CD4-positive, alpha-beta T cell (primary cell): ENCODE measurements at regions of chr6 and their contacts with region 1.

Region 1: GRCh38 chr6:137415127-137415833 is 78.9 kb downstream of the OLIG3 start:
- DNase-seq: peak; percentile 30 to 86 (median 56)
- ATAC-seq: peak; percentile 91
- H3K4me3 ChIP-seq: peak overlapping the region; percentile 52
- H3K4me3 Mint-ChIP-seq: peak overlapping the region; percentile 85
- H3K27ac ChIP-seq: peak overlapping the region; percentile 36 to 71
- H3K27ac Mint-ChIP-seq: peak overlapping the region; percentile 57
- H3K4me1 ChIP-seq: peaks cover 17% of the 10 kb centered on the region
- H3K4me1 Mint-ChIP-seq: peaks cover 13% of the 10 kb centered on the region
- H3K27me3 ChIP-seq: no peaks in the 10 kb centered on the region
- H3K27me3 Mint-ChIP-seq: peaks cover 4% of the 10 kb centered on the region
- CTCF ChIP-seq: peak; percentile 86

Region 2: DNA sequence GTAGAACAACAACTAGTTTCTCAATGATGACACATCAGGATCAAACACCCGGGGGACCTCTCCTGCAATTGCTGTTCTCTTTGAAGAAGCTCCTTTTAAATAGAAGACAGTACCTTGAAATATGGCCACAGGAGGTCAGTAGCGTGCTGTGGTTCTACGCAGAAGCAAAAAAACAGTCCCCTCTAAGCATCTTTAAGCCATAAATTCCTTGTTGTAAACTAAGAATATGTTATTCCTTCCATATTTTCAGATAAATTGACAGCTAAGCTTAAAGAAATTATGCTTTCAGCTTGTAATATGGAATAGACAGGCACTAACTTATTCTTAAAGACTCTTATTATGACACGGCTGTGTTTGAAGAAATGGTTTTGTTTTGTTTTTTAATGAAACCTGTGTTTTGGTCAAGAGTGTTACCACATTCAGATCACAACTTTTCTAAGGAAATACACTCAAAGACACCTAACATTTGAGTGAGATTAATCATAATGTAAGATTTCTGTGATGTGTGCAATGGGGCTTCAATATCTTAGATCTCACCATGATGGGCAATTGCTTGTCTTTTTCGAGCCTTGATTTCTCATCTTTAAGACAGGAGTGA is 320.8 kb before region 1 on chr6:
- CTCF ChIA-PET with region 1: interaction called, 5 read pairs
- POLR2A ChIA-PET with region 1: interaction called, 3 read pairs
- intact Hi-C with region 1: loop called (anchors 5 to 10 kb)
- DNase-seq: peak; percentile 22 to 80 (median 37)
- ATAC-seq: no peak
- H3K4me3 ChIP-seq: no peak overlapping the region
- H3K4me3 Mint-ChIP-seq: no peak overlapping the region
- H3K27ac ChIP-seq: no peak overlapping the region
- H3K27ac Mint-ChIP-seq: no peak overlapping the region
- H3K4me1 ChIP-seq: peaks cover 9% of the 10 kb centered on the region
- H3K4me1 Mint-ChIP-seq: peaks cover 12% of the 10 kb centered on the region
- H3K27me3 ChIP-seq: no peaks in the 10 kb centered on the region
- H3K27me3 Mint-ChIP-seq: peaks cover 5% of the 10 kb centered on the region
- CTCF ChIP-seq: peak; percentile 71

Region 3: GRCh38 chr6:137224799-137225198 is 190.5 kb before region 1 on chr6:
- CTCF ChIA-PET with region 1: no interaction called
- POLR2A ChIA-PET with region 1: no interaction called
- intact Hi-C with region 1: no loop called
- DNase-seq: peak in 4 of 14 experiments; percentile 18 to 70 (median 60)
- ATAC-seq: peak; percentile 57
- H3K4me3 ChIP-seq: no peak overlapping the region
- H3K4me3 Mint-ChIP-seq: peak overlapping the region; percentile 39
- H3K27ac ChIP-seq: no peak overlapping the region
- H3K27ac Mint-ChIP-seq: peak overlapping the region; percentile 2
- H3K4me1 ChIP-seq: peaks cover 45% of the 10 kb centered on the region
- H3K4me1 Mint-ChIP-seq: peaks cover 50% of the 10 kb centered on the region
- H3K27me3 ChIP-seq: no peaks in the 10 kb centered on the region
- H3K27me3 Mint-ChIP-seq: no peaks in the 10 kb centered on the region
- CTCF ChIP-seq: no peak

Region 4: DNA sequence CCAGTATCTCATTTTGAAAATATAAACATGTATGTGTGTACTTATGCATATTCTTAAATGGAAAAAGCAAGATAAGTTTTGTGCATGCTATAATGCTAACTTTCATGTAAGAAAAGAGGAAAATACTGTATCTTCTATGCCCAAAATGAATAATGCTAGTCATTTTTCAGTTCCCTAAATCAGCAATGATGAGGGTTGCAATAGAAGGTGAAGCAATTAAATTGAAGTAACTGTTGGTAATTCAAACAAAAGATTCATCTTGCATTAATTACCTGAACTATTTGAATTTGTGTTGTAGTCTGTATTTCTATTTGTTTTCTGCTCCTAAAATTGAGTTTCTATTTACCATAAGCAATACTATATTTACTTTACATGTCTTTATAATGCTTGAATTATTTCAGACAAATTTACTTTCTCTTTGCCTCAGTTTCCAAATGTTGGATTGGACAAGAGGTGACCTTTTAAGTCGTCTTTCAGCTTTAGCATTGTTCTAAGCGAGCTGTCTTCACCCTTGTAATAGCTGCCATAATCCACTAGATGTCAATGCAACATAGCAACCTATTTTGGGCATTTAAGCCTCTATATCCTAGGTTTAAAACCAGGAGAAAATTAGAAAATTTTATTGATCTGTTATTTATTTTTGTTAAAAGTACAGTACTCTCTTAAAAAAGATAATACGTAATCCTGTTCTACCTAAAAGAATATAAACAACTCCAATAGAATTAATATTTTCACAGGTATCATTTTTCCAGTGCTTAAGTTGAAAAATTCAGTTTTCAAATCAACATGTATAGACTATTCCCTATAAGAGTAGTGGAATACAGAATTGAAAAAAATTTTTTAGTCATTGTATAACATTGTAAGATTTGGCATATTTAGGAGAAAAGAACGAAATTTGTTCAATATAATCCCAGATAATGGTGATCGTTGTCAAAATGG is 143.8 kb before region 1 on chr6:
- CTCF ChIA-PET with region 1: interaction called, 9 read pairs
- POLR2A ChIA-PET with region 1: interaction called, 4 read pairs
- intact Hi-C with region 1: loop called (anchors 1 to 2 kb)
- DNase-seq: peak in 3 of 14 experiments; percentile 58 to 64 (median 62)
- ATAC-seq: peak; percentile 66
- H3K4me3 ChIP-seq: no peak overlapping the region
- H3K4me3 Mint-ChIP-seq: no peak overlapping the region
- H3K27ac ChIP-seq: no peak overlapping the region
- H3K27ac Mint-ChIP-seq: no peak overlapping the region
- H3K4me1 ChIP-seq: no peaks in the 10 kb centered on the region
- H3K4me1 Mint-ChIP-seq: peaks cover 4% of the 10 kb centered on the region
- H3K27me3 ChIP-seq: no peaks in the 10 kb centered on the region
- H3K27me3 Mint-ChIP-seq: peaks cover 8% of the 10 kb centered on the region
- CTCF ChIP-seq: peak; percentile 90

Region 5: GRCh38 chr6:137341681-137342195 is 73.5 kb before region 1 on chr6:
- CTCF ChIA-PET with region 1: interaction called, 14 read pairs
- POLR2A ChIA-PET with region 1: interaction called, 16 read pairs
- intact Hi-C with region 1: loop called (anchors 1 kb)
- DNase-seq: peak; percentile 29 to 80 (median 50)
- ATAC-seq: peak; percentile 39
- H3K4me3 ChIP-seq: no peak overlapping the region
- H3K4me3 Mint-ChIP-seq: peak overlapping the region; percentile 81
- H3K27ac ChIP-seq: no peak overlapping the region
- H3K27ac Mint-ChIP-seq: no peak overlapping the region
- H3K4me1 ChIP-seq: peaks cover 12% of the 10 kb centered on the region
- H3K4me1 Mint-ChIP-seq: peaks cover 18% of the 10 kb centered on the region
- H3K27me3 ChIP-seq: peaks cover 0 to 6% of the 10 kb centered on the region in 2 experiments
- H3K27me3 Mint-ChIP-seq: peaks cover 9% of the 10 kb centered on the region
- CTCF ChIP-seq: peak; percentile 72

Region 6: GRCh38 chr6:137389150-137389704 is 26.1 kb before region 1 on chr6:
- CTCF ChIA-PET with region 1: interaction called, 4 read pairs
- POLR2A ChIA-PET with region 1: interaction called, 5 read pairs
- intact Hi-C with region 1: loop called in 1 of 2 experiments (anchors 2 kb)
- DNase-seq: peak; percentile 10 to 91 (median 62)
- ATAC-seq: peak; percentile 95
- H3K4me3 ChIP-seq: peak overlapping the region; percentile 28
- H3K4me3 Mint-ChIP-seq: peak overlapping the region; percentile 70
- H3K27ac ChIP-seq: peak overlapping the region; percentile 54 to 75
- H3K27ac Mint-ChIP-seq: peak overlapping the region; percentile 82
- H3K4me1 ChIP-seq: peaks cover 57% of the 10 kb centered on the region
- H3K4me1 Mint-ChIP-seq: peaks cover 63% of the 10 kb centered on the region
- H3K27me3 ChIP-seq: no peaks in the 10 kb centered on the region
- H3K27me3 Mint-ChIP-seq: no peaks in the 10 kb centered on the region
- CTCF ChIP-seq: no peak

Region 7: GRCh38 chr6:137589067-137589848 is 174.0 kb after region 1 on chr6:
- CTCF ChIA-PET with region 1: interaction called, 3 read pairs
- POLR2A ChIA-PET with region 1: interaction called, 5 read pairs
- intact Hi-C with region 1: loop called in 1 of 2 experiments (anchors 5 kb)
- DNase-seq: peak; percentile 9 to 87 (median 37)
- ATAC-seq: peak; percentile 100
- H3K4me3 ChIP-seq: no peak overlapping the region
- H3K4me3 Mint-ChIP-seq: no peak overlapping the region
- H3K27ac ChIP-seq: no peak overlapping the region
- H3K27ac Mint-ChIP-seq: no peak overlapping the region
- H3K4me1 ChIP-seq: peaks cover 10% of the 10 kb centered on the region
- H3K4me1 Mint-ChIP-seq: peaks cover 7% of the 10 kb centered on the region
- H3K27me3 ChIP-seq: peaks cover 0 to 5% of the 10 kb centered on the region in 2 experiments
- H3K27me3 Mint-ChIP-seq: peaks cover 28% of the 10 kb centered on the region
- CTCF ChIP-seq: peak; percentile 67